Activated CD4-positive, alpha-beta T cell treated with anti-CD3 and anti-CD28 coated beads for 36 hours (primary cell): ENCODE measurements at regions of chr9 and their contacts with region 1.

Region 1: GRCh38 chr9:68653141-68653595 is 51.9 kb upstream of the PIP5K1B start:
- DNase-seq: peak; percentile 67
- ATAC-seq: peak; percentile 73
- H3K4me3 Mint-ChIP-seq: no peak overlapping the region
- H3K27ac Mint-ChIP-seq: peak overlapping the region; percentile 72
- H3K4me1 Mint-ChIP-seq: peaks cover 35% of the 10 kb centered on the region
- H3K27me3 Mint-ChIP-seq: peaks cover 22% of the 10 kb centered on the region

Region 2: DNA sequence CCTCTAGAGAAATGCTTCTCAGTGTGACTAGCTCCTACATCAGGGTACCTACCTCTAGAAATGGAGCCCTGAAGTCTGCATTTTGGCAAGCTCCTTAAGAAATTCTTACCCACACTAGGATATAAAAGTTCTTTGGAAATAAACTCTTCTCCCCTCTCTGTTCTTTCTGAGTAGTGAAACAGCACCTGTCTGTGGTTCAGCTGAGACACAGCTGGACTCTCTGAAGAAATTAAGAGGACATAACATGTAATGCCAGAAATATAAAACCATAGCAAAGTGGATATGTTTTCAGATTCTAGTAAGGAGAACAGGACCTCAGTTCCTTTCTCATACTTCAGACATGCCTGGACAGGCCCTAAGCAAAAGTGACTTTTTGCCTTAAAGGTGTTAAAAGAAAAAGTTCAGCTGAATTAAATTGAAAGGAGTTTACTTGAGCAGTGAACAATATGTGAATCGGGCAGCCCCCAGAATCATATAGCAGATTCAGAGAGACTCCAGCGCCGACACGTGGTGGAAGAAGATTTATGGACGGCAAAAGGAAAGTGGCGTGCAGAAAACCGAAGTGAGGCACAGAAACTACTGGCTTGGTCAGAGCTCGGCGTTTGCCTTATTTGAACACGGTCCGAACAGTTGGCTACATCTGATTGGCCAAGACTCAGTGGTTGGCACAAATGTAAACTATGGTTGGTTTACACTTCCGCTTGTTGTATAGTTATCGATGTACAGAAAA is 296.3 kb after region 1 on chr9:
- CTCF ChIA-PET with region 1: interaction called, 3 read pairs
- POLR2A ChIA-PET with region 1: no interaction called
- intact Hi-C with region 1: loop called (anchors 1 to 2 kb)
- DNase-seq: peak; percentile 55
- ATAC-seq: no peak
- H3K4me3 Mint-ChIP-seq: no peak overlapping the region
- H3K27ac Mint-ChIP-seq: peak overlapping the region; percentile 48
- H3K4me1 Mint-ChIP-seq: peaks cover 42% of the 10 kb centered on the region
- H3K27me3 Mint-ChIP-seq: peaks cover 13% of the 10 kb centered on the region